Naive thymus-derived CD4-positive, alpha-beta T cell (primary cell): ENCODE measurements at regions of chr15 and their contacts with region 1.

Region 1: GRCh38 chr15:65326117-65326526 is 21.6 kb downstream of the RNU5B-1 start:
- DNase-seq: no peak
- ATAC-seq: no peak
- H3K4me3 ChIP-seq: no peak overlapping the region
- H3K4me3 Mint-ChIP-seq: no peak overlapping the region
- H3K27ac ChIP-seq: no peak overlapping the region
- H3K27ac Mint-ChIP-seq: no peak overlapping the region
- H3K4me1 ChIP-seq: no peaks in the 10 kb centered on the region
- H3K4me1 Mint-ChIP-seq: no peaks in the 10 kb centered on the region
- H3K27me3 ChIP-seq: no peaks in the 10 kb centered on the region
- H3K27me3 Mint-ChIP-seq: peaks cover 0 to 22% (median 18%) of the 10 kb centered on the region in 5 donors

Region 2: GRCh38 chr15:64731012-64731806 is 594.9 kb before region 1 on chr15:
- CTCF ChIA-PET with region 1: no interaction called
- POLR2A ChIA-PET with region 1: no interaction called
- intact Hi-C with region 1: no loop called
- DNase-seq: peak; percentile 65 to 86 (median 77)
- ATAC-seq: peak; percentile 87
- H3K4me3 ChIP-seq: no peak overlapping the region
- H3K4me3 Mint-ChIP-seq: peak overlapping the region in 2 of 10 donors; percentile 4 to 46
- H3K27ac ChIP-seq: no peak overlapping the region
- H3K27ac Mint-ChIP-seq: peak overlapping the region in 1 of 9 donors; percentile 57
- H3K4me1 ChIP-seq: no peaks in the 10 kb centered on the region
- H3K4me1 Mint-ChIP-seq: peaks cover 8 to 12% (median 10%) of the 10 kb centered on the region in 7 donors
- H3K27me3 ChIP-seq: no peaks in the 10 kb centered on the region
- H3K27me3 Mint-ChIP-seq: peaks cover 0 to 5% (median 4%) of the 10 kb centered on the region in 5 donors

Region 3: DNA sequence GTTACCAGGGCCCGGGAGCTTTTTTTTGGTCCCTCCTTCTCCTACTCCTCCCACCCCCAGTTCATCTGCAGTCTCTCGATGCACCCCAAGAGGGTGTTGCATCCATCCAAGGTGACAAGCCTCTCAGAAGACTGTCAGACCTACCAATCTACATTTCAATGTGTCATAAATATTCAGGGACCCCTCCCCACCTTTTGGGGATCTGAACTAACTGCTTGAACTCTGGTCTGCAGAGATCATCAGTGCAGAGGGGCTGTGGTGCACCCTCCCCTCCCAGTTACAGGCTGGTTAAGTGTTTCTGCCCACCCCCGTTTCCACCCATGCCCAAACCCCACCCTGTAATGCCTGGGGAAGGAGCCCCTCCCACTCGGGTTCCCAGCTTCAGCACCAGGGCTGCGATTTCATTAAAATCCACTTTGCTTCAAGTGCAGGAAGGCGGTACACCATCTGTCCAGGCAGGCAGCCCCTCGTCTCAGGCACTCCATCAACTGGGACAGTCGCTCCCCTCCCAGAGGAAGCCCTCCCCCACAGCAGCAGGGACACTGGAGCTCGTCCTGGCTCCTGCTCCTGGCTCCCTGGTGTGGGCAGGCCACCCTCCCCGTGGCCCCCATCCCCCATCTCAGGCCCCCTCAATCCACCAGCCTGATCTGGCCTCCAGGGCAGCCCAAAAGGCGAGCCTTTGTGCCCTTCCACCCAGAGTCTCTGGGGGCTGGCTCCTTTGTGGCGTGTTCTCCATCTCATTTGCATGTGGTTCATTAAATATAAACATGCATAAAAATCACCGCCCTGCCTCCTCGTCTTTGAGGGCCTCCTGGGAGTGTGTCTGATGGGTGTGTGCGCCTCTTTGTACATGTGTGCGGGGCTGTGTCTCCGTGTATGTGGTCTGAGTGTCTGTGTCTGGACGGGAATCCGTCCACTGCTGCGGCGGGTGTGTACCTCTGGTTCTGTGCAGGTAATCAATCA is 10.7 kb after region 1 on chr15:
- CTCF ChIA-PET with region 1: no interaction called
- POLR2A ChIA-PET with region 1: no interaction called
- intact Hi-C with region 1: no loop called
- DNase-seq: no peak
- ATAC-seq: no peak
- H3K4me3 ChIP-seq: no peak overlapping the region
- H3K4me3 Mint-ChIP-seq: no peak overlapping the region
- H3K27ac ChIP-seq: no peak overlapping the region
- H3K27ac Mint-ChIP-seq: no peak overlapping the region
- H3K4me1 ChIP-seq: no peaks in the 10 kb centered on the region
- H3K4me1 Mint-ChIP-seq: peaks cover 0 to 6% (median 0%) of the 10 kb centered on the region in 7 donors
- H3K27me3 ChIP-seq: no peaks in the 10 kb centered on the region
- H3K27me3 Mint-ChIP-seq: peaks cover 0 to 18% (median 5%) of the 10 kb centered on the region in 5 donors

Region 4: GRCh38 chr15:65368302-65369211 is 42.4 kb after region 1 on chr15:
- CTCF ChIA-PET with region 1: no interaction called
- POLR2A ChIA-PET with region 1: no interaction called
- intact Hi-C with region 1: loop called in 1 of 2 experiments (anchors 1 kb)
- DNase-seq: no peak
- ATAC-seq: no peak
- H3K4me3 ChIP-seq: no peak overlapping the region
- H3K4me3 Mint-ChIP-seq: no peak overlapping the region
- H3K27ac ChIP-seq: no peak overlapping the region
- H3K27ac Mint-ChIP-seq: no peak overlapping the region
- H3K4me1 ChIP-seq: no peaks in the 10 kb centered on the region
- H3K4me1 Mint-ChIP-seq: peaks cover 0 to 6% (median 0%) of the 10 kb centered on the region in 7 donors
- H3K27me3 ChIP-seq: no peaks in the 10 kb centered on the region
- H3K27me3 Mint-ChIP-seq: peaks cover 4 to 13% (median 9%) of the 10 kb centered on the region in 5 donors

Region 5: DNA sequence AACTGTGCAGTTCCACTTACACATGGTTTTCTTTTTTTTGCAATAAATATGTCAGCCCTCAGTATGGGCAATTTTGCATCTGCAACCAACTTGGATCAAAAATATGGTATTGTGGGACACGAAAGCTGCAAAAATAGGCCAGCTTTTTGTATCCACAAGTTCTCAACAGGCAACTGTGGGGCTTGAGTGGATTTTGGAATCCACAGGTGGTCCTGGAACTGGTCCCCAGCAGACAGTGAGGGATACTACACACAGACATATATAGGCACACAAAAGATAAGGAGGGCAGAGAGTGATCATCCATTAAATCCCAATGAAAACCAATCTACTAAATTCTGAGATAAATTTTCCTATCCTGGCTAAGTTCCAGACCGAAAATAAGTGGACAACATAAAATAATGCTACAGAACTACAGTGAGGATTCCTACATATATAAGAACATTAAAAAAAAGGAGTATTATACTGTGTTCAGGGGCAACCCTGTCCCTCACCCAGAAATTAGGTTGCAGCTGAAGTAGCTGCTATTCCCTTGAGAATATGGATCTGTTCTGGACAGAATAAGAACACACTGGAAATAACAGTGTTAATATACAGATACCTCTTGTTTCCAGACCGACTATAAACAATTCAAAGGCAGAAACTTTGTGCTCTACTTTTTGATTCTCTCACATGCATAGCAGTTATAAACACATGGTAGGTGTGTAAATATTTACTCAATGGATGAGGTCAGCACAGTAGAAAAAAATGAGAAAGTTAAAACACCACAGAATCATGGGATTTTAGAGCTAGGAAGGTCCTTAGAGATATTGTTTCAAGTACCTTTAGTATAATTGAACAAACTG is 440.5 kb after region 1 on chr15:
- CTCF ChIA-PET with region 1: no interaction called
- POLR2A ChIA-PET with region 1: no interaction called
- intact Hi-C with region 1: no loop called
- DNase-seq: no peak
- ATAC-seq: no peak
- H3K4me3 ChIP-seq: no peak overlapping the region
- H3K4me3 Mint-ChIP-seq: peak overlapping the region in 2 of 10 donors; percentile 46 to 52
- H3K27ac ChIP-seq: no peak overlapping the region
- H3K27ac Mint-ChIP-seq: peak overlapping the region in 3 of 9 donors; percentile 15 to 69 (median 24)
- H3K4me1 ChIP-seq: peaks cover 12 to 21% of the 10 kb centered on the region in 2 donors
- H3K4me1 Mint-ChIP-seq: peaks cover 30 to 77% (median 56%) of the 10 kb centered on the region in 7 donors
- H3K27me3 ChIP-seq: no peaks in the 10 kb centered on the region
- H3K27me3 Mint-ChIP-seq: no peaks in the 10 kb centered on the region